ENCODE measurements at regions of chr13 and their contacts with region 1.

Region 1: DNA sequence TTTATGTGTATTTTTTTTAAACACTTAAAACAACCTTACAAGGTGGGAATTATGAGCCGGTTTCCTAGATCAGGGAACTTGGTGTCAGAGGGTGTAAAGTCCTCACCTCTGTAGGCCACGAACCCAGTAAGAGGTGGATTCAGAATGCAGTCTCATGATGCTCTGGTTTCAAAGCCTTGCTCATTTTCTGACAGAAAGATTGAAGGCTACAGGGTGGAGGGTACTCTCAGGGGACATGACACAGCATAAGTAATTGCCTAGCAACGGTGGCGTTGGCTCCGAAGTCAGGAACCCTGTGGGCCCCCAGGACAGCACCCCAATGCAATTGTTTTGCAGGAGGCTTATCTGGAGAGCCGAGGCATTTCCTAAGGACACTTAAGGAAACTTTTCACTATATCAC is 794.7 kb downstream of the EFNB2 start:
- DNase-seq: no peak
- H3K4me3 ChIP-seq: no peak overlapping the region
- H3K27ac ChIP-seq: no peak overlapping the region
- H3K4me1 ChIP-seq: no peaks in the 10 kb centered on the region
- H3K27me3 ChIP-seq: no peaks in the 10 kb centered on the region
- CTCF ChIP-seq: no peak

Region 2: GRCh38 chr13:104616990-104617389 is 1123.7 kb before region 1 on chr13:
- CTCF ChIA-PET with region 1: no interaction called
- POLR2A ChIA-PET with region 1: no interaction called
- intact Hi-C with region 1: no loop called
- DNase-seq: no peak
- H3K4me3 ChIP-seq: no peak overlapping the region
- H3K27ac ChIP-seq: no peak overlapping the region
- H3K4me1 ChIP-seq: no peaks in the 10 kb centered on the region
- H3K27me3 ChIP-seq: no peaks in the 10 kb centered on the region
- CTCF ChIP-seq: no peak

Region 3: DNA sequence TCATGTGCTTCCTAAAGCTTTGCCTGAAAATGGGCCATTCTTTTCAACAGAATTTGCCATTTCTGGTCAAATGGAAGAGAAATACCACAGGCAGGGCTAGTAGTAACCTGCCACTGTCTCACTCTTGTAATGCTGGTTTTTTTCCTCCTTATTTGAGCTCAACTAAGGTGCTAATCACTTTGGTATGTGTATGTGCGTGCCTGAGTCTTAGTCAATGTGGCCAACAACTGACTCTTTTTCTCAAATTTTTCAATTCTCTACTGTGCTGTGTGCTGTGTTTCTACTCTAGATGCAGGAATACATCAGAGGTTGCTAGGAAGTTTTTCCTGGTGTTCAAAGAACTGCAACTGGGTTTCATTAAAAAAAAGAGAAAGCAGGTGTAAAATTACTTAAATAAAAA is 75.5 kb before region 1 on chr13:
- CTCF ChIA-PET with region 1: no interaction called
- POLR2A ChIA-PET with region 1: interaction called, 11 read pairs
- intact Hi-C with region 1: no loop called
- DNase-seq: peak in 1 of 2 experiments; percentile 60
- H3K4me3 ChIP-seq: no peak overlapping the region
- H3K27ac ChIP-seq: no peak overlapping the region
- H3K4me1 ChIP-seq: no peaks in the 10 kb centered on the region
- H3K27me3 ChIP-seq: no peaks in the 10 kb centered on the region
- CTCF ChIP-seq: no peak